Endothelial cell of umbilical vein (primary cell): ENCODE measurements at regions of chr2 and their contacts with region 1.

Region 1: GRCh38 chr2:178128836-178129630 is 16.8 kb downstream of the RBM45 start:
- DNase-seq: no peak
- H3K4me3 ChIP-seq: no peak overlapping the region
- H3K27ac ChIP-seq: no peak overlapping the region
- H3K4me1 ChIP-seq: no peaks in the 10 kb centered on the region
- H3K27me3 ChIP-seq: no peaks in the 10 kb centered on the region
- CTCF ChIP-seq: no peak
- POLR2A ChIP-seq: no peak

Region 2: GRCh38 chr2:177942731-177943130 is 186.3 kb before region 1 on chr2:
- CTCF ChIA-PET with region 1: no interaction called
- POLR2A ChIA-PET with region 1: no interaction called
- dilution Hi-C with region 1: no loop called
- intact Hi-C with region 1: no loop called
- DNase-seq: no peak
- H3K4me3 ChIP-seq: no peak overlapping the region
- H3K27ac ChIP-seq: no peak overlapping the region
- H3K4me1 ChIP-seq: no peaks in the 10 kb centered on the region
- H3K27me3 ChIP-seq: no peaks in the 10 kb centered on the region
- CTCF ChIP-seq: no peak
- POLR2A ChIP-seq: no peak

Region 3: DNA sequence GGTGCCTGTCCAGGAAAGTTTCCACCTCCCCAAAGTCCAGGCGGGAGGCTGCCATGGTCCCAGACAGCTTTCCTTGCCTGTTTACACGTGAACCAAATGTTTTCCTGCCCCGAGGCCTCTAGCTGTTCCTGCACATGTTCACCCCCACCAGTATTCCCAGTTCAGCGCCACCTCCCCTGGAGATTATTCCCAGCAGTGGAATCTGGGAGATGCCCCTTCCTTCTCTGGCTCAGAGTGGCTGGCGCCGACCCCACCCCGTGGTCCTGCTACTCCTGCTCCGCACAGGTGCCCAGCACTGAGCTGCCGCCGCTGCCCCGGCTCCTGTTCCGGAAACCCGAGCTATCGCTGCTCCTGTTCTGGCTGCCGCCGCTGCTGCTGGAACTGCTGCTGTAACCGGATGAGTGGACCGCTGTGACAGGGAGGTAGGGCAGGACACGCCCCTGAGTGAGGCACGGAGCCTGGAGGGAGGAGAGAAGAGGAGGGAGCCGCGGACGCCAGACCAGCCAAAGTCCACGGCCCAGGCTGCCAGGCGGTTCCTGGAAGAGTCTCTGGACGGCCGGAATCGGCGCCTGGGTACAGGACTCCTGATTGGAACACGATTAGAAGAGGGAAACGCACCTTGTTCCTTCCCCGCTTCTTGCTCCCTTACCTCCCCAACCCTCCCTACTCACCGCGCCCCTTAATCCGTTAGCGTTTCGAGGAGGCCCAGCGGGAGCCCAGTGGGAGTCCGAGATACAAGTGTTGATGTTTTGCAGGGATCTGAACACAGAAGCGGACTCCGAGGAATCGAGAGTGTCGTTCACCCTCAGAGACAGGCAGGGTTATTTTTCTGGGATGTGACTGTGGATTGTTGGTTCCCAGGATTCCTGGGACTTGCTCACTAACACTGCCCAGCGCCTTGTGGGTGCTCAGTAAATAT is 56.4 kb before region 1 on chr2 and contains the start of gene PDE11A:
- CTCF ChIA-PET with region 1: no interaction called
- POLR2A ChIA-PET with region 1: no interaction called
- dilution Hi-C with region 1: no loop called
- intact Hi-C with region 1: no loop called
- DNase-seq: peak; percentile 52
- H3K4me3 ChIP-seq: peak within 1 kb of the TSS; percentile 2 to 61 (median 50)
- H3K27ac ChIP-seq: no peak within 1 kb of the TSS
- H3K4me1 ChIP-seq: peaks cover 16% of the 10 kb centered on the region
- H3K27me3 ChIP-seq: peaks cover 5 to 6% of the 10 kb centered on the region in 2 experiments
- CTCF ChIP-seq: no peak
- POLR2A ChIP-seq: no peak
- total RNA-seq, gene PDE11A: 0.25 and 0.51 TPM in 2 replicates

Region 4: GRCh38 chr2:178142274-178143065 is 13.4 kb after region 1 on chr2:
- CTCF ChIA-PET with region 1: interaction called, 11 read pairs
- POLR2A ChIA-PET with region 1: no interaction called
- dilution Hi-C with region 1: no loop called
- intact Hi-C with region 1: no loop called
- DNase-seq: no peak
- H3K4me3 ChIP-seq: no peak overlapping the region
- H3K27ac ChIP-seq: no peak overlapping the region
- H3K4me1 ChIP-seq: no peaks in the 10 kb centered on the region
- H3K27me3 ChIP-seq: no peaks in the 10 kb centered on the region
- CTCF ChIP-seq: no peak
- POLR2A ChIP-seq: no peak

Region 5: GRCh38 chr2:178298785-178299212 is 169.8 kb after region 1 on chr2:
- CTCF ChIA-PET with region 1: no interaction called
- POLR2A ChIA-PET with region 1: no interaction called
- dilution Hi-C with region 1: no loop called
- intact Hi-C with region 1: loop called (anchors 5 kb)
- DNase-seq: peak; percentile 93
- H3K4me3 ChIP-seq: no peak overlapping the region
- H3K27ac ChIP-seq: peak overlapping the region; percentile 37
- H3K4me1 ChIP-seq: peaks cover 29% of the 10 kb centered on the region
- H3K27me3 ChIP-seq: no peaks in the 10 kb centered on the region
- CTCF ChIP-seq: no peak
- POLR2A ChIP-seq: no peak

Region 6: GRCh38 chr2:178397002-178397605 is 268.1 kb after region 1 on chr2:
- CTCF ChIA-PET with region 1: interaction called, 7 read pairs
- POLR2A ChIA-PET with region 1: no interaction called
- dilution Hi-C with region 1: no loop called
- intact Hi-C with region 1: loop called (anchors 5 kb)
- DNase-seq: peak; percentile 59
- H3K4me3 ChIP-seq: no peak overlapping the region
- H3K27ac ChIP-seq: no peak overlapping the region
- H3K4me1 ChIP-seq: no peaks in the 10 kb centered on the region
- H3K27me3 ChIP-seq: no peaks in the 10 kb centered on the region
- CTCF ChIP-seq: peak; percentile 43 to 51
- POLR2A ChIP-seq: no peak